Psoas muscle (tissue), 8 donors: ENCODE measurements at regions of chr11 and their contacts with region 1.

Region 1: GRCh38 chr11:112588252-112588694 is 327.6 kb upstream of the PLET1 start:
- DNase-seq: peak; percentile 59 to 73
- ATAC-seq: peak; percentile 83 to 95 (median 89)
- H3K4me3 ChIP-seq: no peak overlapping the region
- H3K27ac ChIP-seq: no peak overlapping the region
- H3K4me1 ChIP-seq: no peaks in the 10 kb centered on the region
- H3K27me3 ChIP-seq: no peaks in the 10 kb centered on the region
- CTCF ChIP-seq: peak; percentile 84

Region 2: GRCh38 chr11:112655371-112655770 is 67.1 kb after region 1 on chr11:
- intact Hi-C with region 1: loop called in 1 of 2 experiments (anchors 5 kb)
- DNase-seq: peak; percentile 77 to 91
- ATAC-seq: peak; percentile 21 to 52 (median 31)
- H3K4me3 ChIP-seq: no peak overlapping the region
- H3K27ac ChIP-seq: peak overlapping the region; percentile 14
- H3K4me1 ChIP-seq: peaks cover 66% of the 10 kb centered on the region
- H3K27me3 ChIP-seq: no peaks in the 10 kb centered on the region
- CTCF ChIP-seq: no peak

Region 3: DNA sequence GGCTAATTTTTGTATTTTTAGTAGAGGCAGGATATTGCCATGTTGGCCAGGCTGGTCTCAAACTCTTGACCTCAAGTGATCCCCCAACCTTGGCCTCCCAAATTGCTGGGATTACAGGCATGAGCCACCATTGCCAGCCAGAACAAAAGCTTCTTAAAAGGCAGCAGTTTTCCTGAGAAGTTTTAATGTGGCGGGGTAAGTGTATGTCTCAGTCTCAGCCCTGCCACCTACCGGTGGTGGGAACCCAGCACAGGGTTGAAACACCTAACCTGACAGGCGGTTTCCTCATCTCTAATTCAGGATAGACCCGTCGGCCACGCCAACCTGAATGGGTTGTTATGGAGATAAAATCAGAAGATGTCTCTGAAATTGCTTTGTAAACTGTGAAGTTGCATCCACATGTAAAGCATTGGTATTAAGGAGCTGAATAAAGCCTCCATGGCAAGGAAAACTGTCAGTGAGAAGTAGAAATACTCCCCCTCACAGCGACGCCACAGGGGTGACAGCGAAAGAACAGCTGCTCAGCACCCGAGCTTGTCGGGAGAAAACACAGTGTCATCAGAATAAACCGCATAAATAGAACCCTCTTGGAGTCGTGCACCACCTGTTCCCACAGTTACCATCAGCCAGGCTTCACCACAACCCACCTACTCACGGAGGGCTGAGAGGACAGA is 207.0 kb after region 1 on chr11:
- intact Hi-C with region 1: loop called (anchors 1 to 2 kb)
- DNase-seq: peak; percentile 55 to 67
- ATAC-seq: peak; percentile 72 to 86 (median 74)
- H3K4me3 ChIP-seq: no peak overlapping the region
- H3K27ac ChIP-seq: peak overlapping the region; percentile 47
- H3K4me1 ChIP-seq: no peaks in the 10 kb centered on the region
- H3K27me3 ChIP-seq: no peaks in the 10 kb centered on the region
- CTCF ChIP-seq: peak; percentile 65

Region 4: DNA sequence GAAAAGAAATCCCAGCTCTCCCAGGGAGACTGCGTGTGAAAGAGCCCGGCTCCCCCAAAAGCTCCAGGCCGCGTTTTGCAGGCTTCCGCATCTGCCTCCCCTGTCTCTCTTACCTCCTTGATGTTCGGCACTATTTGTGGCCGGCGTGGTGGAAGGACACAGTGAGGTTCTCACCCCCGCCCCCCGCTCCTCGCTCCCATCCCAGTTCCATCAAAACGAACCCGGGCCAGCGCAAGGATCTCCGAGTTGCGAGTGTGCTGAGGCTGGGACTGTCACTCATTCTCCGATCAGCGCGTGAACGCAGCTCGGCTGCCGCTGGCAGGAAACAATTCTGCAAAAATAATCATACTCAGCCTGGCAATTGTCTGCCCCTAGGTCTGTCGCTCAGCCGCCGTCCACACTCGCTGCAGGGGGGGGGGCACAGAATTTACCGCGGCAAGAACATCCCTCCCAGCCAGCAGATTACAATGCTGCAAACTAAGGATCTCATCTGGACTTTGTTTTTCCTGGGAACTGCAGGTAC is 372.9 kb after region 1 on chr11 and contains the start of gene NCAM1:
- intact Hi-C with region 1: loop called in 1 of 2 experiments (anchors 10 kb)
- DNase-seq: peak; percentile 73 to 78
- ATAC-seq: peak; percentile 37 to 68 (median 62)
- H3K4me3 ChIP-seq: peak within 1 kb of the TSS; percentile 65
- H3K27ac ChIP-seq: no peak within 1 kb of the TSS
- H3K4me1 ChIP-seq: no peaks in the 10 kb centered on the region
- H3K27me3 ChIP-seq: peaks cover 0 to 68% (median 18%) of the 10 kb centered on the region in 3 donors
- CTCF ChIP-seq: no peak
- total RNA-seq, gene NCAM1: 3.0 to 50.3 (median 8.9) TPM

Region 5: GRCh38 chr11:113113801-113114706 is 525.8 kb after region 1 on chr11:
- intact Hi-C with region 1: loop called (anchors 2 to 5 kb)
- DNase-seq: peak; percentile 59 to 77
- ATAC-seq: peak; percentile 90 to 96 (median 96)
- H3K4me3 ChIP-seq: no peak overlapping the region
- H3K27ac ChIP-seq: no peak overlapping the region
- H3K4me1 ChIP-seq: peaks cover 13% of the 10 kb centered on the region
- H3K27me3 ChIP-seq: no peaks in the 10 kb centered on the region
- CTCF ChIP-seq: peak; percentile 77